Activated CD8-positive, alpha-beta T cell treated with anti-CD3 and anti-CD28 coated beads for 36 hours (primary cell): ENCODE measurements at regions of chr16 and their contacts with region 1.

Region 1: DNA sequence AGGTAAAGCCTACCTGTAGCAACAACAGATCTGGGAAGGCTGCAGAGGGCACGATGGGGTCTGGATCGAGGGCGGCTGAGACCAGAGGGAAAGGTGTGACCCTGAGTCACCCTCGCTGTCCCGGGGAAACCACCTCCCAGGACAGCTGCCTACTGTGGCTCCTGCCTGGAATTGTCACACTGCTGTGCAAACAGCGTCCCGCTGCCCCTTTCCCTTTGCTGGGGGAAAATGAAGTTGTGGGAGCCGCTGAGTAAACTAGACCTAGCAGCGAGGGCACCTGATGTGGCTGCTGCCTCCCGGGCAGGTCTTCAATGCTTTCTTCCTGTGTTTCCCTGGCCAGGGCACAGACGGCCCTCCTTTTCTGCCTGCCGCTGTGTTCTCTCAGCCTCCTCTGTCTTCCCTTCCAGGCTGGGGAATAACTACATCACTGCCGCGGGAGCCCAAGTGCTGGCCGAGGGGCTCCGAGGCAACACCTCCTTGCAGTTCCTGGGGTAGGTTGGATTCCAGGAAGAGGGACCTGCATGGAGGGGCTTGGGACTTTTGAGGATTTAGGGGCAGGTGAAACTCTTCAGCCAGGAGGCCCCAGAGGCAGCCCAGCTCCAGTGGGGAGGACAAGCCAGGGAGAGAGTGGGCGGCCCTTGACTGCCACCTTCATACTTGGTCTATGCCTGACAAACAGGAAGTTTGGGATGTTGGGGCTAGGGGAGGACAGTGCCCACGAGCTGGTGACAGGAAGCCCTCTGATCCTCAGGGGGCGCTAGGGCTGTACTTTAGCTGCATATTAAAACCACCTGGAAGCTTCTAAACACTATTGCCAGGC is 22.2 kb upstream of the CYLD start:
- DNase-seq: peak; percentile 53
- ATAC-seq: peak; percentile 57
- H3K4me3 Mint-ChIP-seq: no peak overlapping the region
- H3K27ac Mint-ChIP-seq: no peak overlapping the region
- H3K4me1 Mint-ChIP-seq: peaks cover 38% of the 10 kb centered on the region
- H3K27me3 Mint-ChIP-seq: no peaks in the 10 kb centered on the region
- CTCF ChIP-seq: peak; percentile 52

Region 2: GRCh38 chr16:50735629-50736122 is 15.9 kb after region 1 on chr16:
- CTCF ChIA-PET with region 1: interaction called, 34 read pairs
- POLR2A ChIA-PET with region 1: no interaction called
- intact Hi-C with region 1: no loop called
- DNase-seq: peak; percentile 51
- ATAC-seq: peak; percentile 43
- H3K4me3 Mint-ChIP-seq: no peak overlapping the region
- H3K27ac Mint-ChIP-seq: no peak overlapping the region
- H3K4me1 Mint-ChIP-seq: peaks cover 29% of the 10 kb centered on the region
- H3K27me3 Mint-ChIP-seq: no peaks in the 10 kb centered on the region
- CTCF ChIP-seq: no peak